ENCODE measurements at regions of chr10 and their contacts with region 1.

Region 1: GRCh38 chr10:122565728-122566206 is 5.2 kb downstream of the DMBT1 start:
- H3K4me3 ChIP-seq: no peak overlapping the region
- H3K27ac ChIP-seq: no peak overlapping the region
- H3K4me1 ChIP-seq: no peaks in the 10 kb centered on the region
- CTCF ChIP-seq: no peak

Region 2: GRCh38 chr10:122213766-122214165 is 352.0 kb before region 1 on chr10:
- CTCF ChIA-PET with region 1: no interaction called
- POLR2A ChIA-PET with region 1: no interaction called
- H3K4me3 ChIP-seq: no peak overlapping the region
- H3K27ac ChIP-seq: no peak overlapping the region
- H3K4me1 ChIP-seq: no peaks in the 10 kb centered on the region
- CTCF ChIP-seq: no peak

Region 3: GRCh38 chr10:122298598-122299301 is 267.0 kb before region 1 on chr10:
- CTCF ChIA-PET with region 1: interaction called, 26 read pairs
- POLR2A ChIA-PET with region 1: interaction called, 4 read pairs
- H3K4me3 ChIP-seq: no peak overlapping the region
- H3K27ac ChIP-seq: no peak overlapping the region; the same call in 1 of the 2 replicates
- H3K4me1 ChIP-seq: no peaks in the 10 kb centered on the region
- CTCF ChIP-seq: peak; percentile 75

Region 4: DNA sequence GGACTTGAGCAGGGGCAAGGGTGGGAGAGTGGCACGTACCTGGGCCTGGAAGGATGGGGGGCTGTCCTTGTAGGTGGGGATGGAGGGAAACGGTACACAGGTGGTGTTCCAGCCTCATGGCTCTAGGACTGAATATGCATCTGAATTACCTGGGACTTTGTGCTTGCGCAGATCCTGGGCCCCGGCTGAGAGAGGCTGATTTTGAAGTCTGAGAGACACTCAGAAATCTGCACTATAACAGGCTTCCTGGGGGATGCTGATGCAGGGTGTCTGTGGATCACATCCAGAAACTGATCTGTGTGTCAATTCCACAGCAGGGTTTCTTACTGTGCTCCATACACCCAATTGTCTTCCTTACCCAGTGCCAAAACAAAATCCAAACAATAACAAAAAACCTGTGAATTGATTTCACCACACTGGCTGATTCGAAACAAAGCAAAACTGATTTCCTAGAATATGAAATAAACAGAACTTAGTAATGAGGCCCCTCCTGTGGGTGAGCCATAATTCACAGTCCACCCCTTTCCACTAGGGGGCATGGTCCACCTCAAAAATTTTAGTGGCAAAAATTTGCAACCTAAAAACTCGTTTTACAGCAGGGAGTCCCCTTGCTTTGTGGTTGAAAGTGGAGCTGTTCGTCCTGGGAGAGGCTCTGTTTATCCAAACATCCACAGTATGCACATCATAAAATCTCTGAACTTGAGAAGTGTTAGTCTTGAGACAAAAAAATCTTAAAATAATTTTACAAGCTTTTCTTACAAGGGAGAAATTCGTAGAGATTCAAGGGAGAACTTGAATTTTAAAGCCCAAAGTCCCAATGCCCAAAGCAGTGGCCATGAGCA is 223.3 kb before region 1 on chr10:
- CTCF ChIA-PET with region 1: interaction called, 10 read pairs
- POLR2A ChIA-PET with region 1: no interaction called
- H3K4me3 ChIP-seq: no peak overlapping the region
- H3K27ac ChIP-seq: no peak overlapping the region
- H3K4me1 ChIP-seq: no peaks in the 10 kb centered on the region
- CTCF ChIP-seq: peak; percentile 47; the same call in 1 of the 2 replicates

Region 5: GRCh38 chr10:122441961-122442360 is 123.8 kb before region 1 on chr10:
- CTCF ChIA-PET with region 1: interaction called, 12 read pairs
- POLR2A ChIA-PET with region 1: no interaction called
- H3K4me3 ChIP-seq: no peak overlapping the region
- H3K27ac ChIP-seq: no peak overlapping the region
- H3K4me1 ChIP-seq: peaks cover 2% of the 10 kb centered on the region; the same call in 1 of the 2 replicates
- CTCF ChIP-seq: no peak

Region 6: DNA sequence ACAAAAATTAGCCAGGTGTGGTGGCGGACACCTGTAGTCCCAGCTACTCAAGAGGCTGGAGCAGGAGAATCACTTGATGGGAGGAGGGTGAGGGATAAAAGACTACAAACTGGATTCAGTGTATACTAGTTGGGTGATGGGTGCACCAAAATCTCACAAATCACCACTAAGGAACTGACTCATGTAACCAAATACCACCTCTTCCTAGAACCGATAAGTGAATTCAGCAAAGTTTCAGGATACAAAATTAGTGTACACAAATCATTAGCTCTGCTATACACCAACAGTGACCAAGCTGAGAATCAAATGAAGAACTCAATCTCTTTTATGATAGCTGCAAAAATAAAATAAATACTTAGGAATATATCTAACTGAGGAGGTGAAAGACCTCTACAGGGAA is 28.2 kb before region 1 on chr10:
- CTCF ChIA-PET with region 1: interaction called, 11 read pairs
- POLR2A ChIA-PET with region 1: no interaction called
- H3K4me3 ChIP-seq: no peak overlapping the region
- H3K27ac ChIP-seq: no peak overlapping the region
- H3K4me1 ChIP-seq: 0 out of 2 replicates have a peak, but pooled peaks cover 2% of the 10 kb centered on the region
- CTCF ChIP-seq: no peak